ENCODE measurements at regions of chr1 and their contacts with region 1.

Region 1: DNA sequence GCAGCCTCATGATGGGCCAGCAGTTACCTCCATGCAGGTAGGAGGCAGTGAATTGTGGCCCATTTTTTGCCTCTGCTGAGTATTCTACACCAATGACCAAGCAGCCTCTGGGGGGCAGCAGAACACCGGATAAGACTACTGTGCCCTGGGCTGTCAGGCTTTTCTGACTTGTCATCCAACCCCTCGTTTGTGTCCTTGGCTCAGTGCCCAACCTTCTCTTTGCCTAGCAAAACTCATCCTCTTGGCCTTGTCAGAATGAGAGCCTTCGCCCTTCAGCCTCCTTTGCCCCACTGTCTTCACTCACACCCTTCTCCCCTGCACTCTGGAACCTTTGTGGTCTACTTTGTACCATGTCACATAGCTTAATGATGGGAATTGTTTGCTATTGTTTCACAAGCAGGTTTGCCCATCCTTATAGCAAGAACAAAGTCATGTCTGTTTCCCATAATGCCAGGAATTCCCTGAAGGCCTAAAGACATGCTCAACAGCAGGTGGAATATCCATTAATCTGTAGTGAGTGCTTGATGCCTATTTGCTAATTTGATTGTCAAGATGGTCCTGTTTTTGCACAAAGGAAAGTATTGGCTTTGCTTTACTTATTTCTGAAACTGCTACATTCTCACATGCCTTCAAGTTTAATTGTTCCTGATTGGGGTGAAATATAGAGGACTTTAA is 255.9 kb downstream of the HHAT start:
- DNase-seq: peak; percentile 68
- CTCF ChIP-seq: peak; percentile 85

Region 2: GRCh38 chr1:210944252-210944651 is 359.7 kb after region 1 on chr1:
- in situ Hi-C with region 1: loop called (anchors 25 kb)
- DNase-seq: no peak
- CTCF ChIP-seq: no peak

Region 3: GRCh38 chr1:211133836-211134669 is 549.5 kb after region 1 on chr1 and contains the start of gene KCNH1:
- in situ Hi-C with region 1: loop called (anchors 25 kb)
- DNase-seq: peak; percentile 90
- CTCF ChIP-seq: peak; percentile 85